Ovary (tissue), 10 donors: ENCODE measurements at regions of chr1 and their contacts with region 1.

Region 1: DNA sequence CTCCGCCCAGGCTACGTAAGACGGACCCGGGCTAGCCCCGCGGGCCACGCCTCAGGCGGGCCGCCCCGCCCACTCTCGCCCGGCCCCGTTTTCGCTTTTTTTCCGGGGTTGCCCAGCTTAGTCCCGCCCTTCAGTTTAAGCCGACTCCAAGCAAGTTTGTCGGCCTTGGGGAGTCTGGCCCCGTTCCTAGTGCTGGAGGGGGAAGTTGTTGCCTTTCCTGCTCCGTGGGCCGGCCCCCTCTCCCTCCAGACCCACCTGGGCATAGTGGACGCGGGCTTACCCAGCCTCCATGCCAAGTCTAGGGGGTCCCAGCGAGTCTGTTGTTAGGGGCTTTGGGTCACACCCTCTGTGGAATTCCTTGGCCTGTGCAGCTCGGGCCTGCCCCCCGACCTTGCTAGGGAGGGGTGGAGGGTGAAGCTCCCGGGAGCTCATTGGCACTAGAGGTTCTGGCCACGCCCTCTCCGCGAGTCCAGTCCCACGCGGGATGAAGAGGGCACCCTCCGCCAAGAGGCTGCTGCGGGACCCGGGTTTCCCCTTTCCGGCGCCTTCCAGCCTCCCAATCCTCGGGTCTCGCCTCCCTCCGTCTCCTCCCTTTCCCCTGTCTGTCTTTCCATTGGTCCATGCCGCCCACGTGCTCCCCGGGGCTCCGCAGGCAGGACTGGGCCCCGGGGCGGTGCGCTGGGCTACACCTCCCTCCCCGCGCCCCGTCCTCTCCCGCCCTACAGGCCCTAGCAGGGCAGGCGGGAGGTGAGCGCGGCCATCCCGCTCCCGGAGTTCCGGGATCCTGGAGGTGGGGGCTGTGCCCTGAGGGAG is 3.3 kb downstream of the RUSC1 start:
- DNase-seq: peak; percentile 94 to 95 (median 94)
- H3K4me3 ChIP-seq: peak overlapping the region; percentile 74
- H3K27ac ChIP-seq: peak overlapping the region; percentile 94 to 96
- H3K4me1 ChIP-seq: peaks cover 7% of the 10 kb centered on the region
- H3K27me3 ChIP-seq: no peaks in the 10 kb centered on the region
- CTCF ChIP-seq: no peak
- EP300 ChIP-seq: no peak
- POLR2A ChIP-seq: peak; percentile 53

Region 2: DNA sequence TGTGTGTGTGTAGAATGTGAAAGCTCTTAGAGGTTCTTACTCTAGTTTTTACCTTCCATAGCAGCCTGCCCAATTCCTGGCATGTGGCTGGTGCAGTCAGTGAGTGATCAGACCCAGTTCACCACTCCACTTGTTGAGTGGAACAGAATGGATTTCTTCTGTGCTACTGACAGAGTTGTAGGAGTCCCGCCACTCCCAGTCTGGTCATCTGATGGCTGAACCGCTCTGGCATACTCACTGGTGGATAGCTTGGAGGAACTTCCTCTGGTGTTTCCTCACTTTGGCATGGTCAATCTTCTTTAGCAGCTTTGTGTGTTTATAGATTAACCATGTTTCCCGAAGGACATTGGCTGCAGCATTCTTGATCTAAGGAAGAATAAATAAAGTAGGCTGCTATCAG is 609.4 kb before region 1 on chr1:
- intact Hi-C with region 1: no loop called
- DNase-seq: no peak
- H3K4me3 ChIP-seq: no peak overlapping the region
- H3K27ac ChIP-seq: no peak overlapping the region
- H3K4me1 ChIP-seq: peaks cover 8% of the 10 kb centered on the region
- H3K27me3 ChIP-seq: no peaks in the 10 kb centered on the region
- CTCF ChIP-seq: no peak
- EP300 ChIP-seq: no peak
- POLR2A ChIP-seq: no peak

Region 3: GRCh38 chr1:155127105-155127964 is 196.7 kb before region 1 on chr1 and contains the start of gene EFNA1:
- intact Hi-C with region 1: no loop called
- DNase-seq: peak; percentile 44 to 76 (median 59)
- H3K4me3 ChIP-seq: peak within 1 kb of the TSS; percentile 63
- H3K27ac ChIP-seq: peak within 1 kb of the TSS in 1 of 2 donors; percentile 33
- H3K4me1 ChIP-seq: peaks cover 15% of the 10 kb centered on the region
- H3K27me3 ChIP-seq: no peaks in the 10 kb centered on the region
- CTCF ChIP-seq: no peak
- EP300 ChIP-seq: peak; percentile 54
- POLR2A ChIP-seq: no peak
- total RNA-seq, gene EFNA1: 12.1 to 51.6 (median 16.6) TPM

Region 4: DNA sequence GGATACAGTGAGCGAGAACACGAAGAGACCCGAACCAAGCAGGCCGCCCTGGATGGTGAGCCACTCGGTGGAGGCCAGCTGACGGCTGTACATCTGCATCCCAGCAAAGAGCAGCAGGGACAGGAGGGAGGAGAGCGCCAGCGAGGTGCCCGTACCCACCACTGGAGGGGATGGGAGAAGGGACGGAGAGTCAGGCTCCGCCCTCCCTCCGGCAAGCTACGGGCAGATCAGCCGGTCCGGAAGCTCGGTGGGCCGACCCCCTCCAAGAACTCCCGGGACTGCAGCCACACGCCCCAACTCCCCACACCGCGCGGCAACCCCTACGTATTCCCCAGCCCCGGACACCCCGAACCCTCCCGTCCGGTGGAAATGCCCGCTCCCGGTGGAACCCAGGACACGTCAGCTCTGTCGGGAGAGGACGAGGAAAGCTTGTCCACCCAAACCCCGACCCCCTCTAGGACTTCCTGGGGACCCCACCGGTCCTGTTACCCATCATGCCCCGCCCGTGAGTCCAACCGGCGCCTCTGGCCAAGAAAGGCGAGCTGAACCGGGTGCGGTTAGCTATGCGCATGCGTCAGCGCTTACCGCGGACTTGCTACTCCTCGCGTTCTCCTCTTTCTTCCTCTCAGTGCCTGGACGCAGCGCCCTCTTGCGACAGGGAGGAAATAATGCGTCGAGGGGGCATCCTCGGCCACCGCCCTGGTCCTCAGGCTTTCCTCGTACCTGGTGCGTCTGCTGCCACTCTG is 151.1 kb before region 1 on chr1 and contains the start of gene KRTCAP2:
- intact Hi-C with region 1: loop called in 1 of 4 experiments (anchors 10 kb)
- DNase-seq: peak; percentile 94 to 96 (median 96)
- H3K4me3 ChIP-seq: peak within 1 kb of the TSS; percentile 95
- H3K27ac ChIP-seq: peak within 1 kb of the TSS; percentile 56 to 80
- H3K4me1 ChIP-seq: no peaks in the 10 kb centered on the region
- H3K27me3 ChIP-seq: no peaks in the 10 kb centered on the region
- CTCF ChIP-seq: peak; percentile 92 to 98 (median 96)
- EP300 ChIP-seq: no peak
- POLR2A ChIP-seq: peak; percentile 72
- total RNA-seq, gene KRTCAP2: 96.5 to 209 (median 158) TPM

Region 5: DNA sequence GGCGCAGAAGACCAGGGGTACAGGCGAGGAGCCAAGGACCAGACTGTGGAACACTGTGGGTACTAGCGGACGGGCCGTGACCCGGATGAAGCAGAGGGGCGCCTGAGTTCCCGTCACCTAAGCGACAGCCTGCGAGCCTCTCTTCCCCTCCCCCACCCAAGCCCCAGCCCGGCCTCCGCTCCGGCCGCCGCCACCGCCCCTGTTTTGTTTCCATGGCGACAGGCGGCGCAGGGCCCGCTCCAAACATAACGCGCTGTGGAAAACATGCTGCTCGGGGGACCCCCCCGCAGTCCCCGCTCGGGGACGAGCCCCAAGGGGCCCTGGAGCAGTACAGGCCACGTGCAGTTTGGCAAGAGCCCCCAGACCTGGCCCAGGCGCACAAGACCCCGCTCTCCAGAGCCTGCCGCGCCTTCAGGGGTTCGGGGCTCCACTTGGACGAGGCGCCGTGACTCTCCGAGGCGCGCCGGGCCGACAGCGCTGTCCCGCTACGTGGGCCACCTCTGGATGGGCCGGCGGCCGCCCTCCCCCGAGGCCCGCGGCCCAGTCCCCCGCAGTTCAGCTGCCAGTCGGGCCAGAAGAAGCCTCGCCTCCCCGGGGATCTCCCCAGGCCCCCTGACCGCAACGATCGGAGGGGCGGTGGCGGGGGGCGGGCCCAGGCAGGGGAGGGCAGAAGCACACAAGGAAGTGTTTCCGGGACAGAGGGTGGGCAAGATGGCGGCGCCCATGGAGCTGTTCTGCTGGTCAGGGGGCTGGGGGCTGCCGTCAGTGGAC is 115.3 kb before region 1 on chr1 and contains the start of gene MTX1:
- intact Hi-C with region 1: loop called in 1 of 4 experiments (anchors 10 kb)
- DNase-seq: peak; percentile 92 to 97 (median 95)
- H3K4me3 ChIP-seq: peak within 1 kb of the TSS; percentile 59
- H3K27ac ChIP-seq: peak within 1 kb of the TSS; percentile 97 to 100
- H3K4me1 ChIP-seq: peaks cover 8% of the 10 kb centered on the region
- H3K27me3 ChIP-seq: no peaks in the 10 kb centered on the region
- CTCF ChIP-seq: peak in 2 of 3 donors; percentile 19 to 29
- EP300 ChIP-seq: peak; percentile 25
- POLR2A ChIP-seq: peak; percentile 75
- total RNA-seq, gene MTX1: 18.5 to 33.4 (median 27.7) TPM

Region 6: DNA sequence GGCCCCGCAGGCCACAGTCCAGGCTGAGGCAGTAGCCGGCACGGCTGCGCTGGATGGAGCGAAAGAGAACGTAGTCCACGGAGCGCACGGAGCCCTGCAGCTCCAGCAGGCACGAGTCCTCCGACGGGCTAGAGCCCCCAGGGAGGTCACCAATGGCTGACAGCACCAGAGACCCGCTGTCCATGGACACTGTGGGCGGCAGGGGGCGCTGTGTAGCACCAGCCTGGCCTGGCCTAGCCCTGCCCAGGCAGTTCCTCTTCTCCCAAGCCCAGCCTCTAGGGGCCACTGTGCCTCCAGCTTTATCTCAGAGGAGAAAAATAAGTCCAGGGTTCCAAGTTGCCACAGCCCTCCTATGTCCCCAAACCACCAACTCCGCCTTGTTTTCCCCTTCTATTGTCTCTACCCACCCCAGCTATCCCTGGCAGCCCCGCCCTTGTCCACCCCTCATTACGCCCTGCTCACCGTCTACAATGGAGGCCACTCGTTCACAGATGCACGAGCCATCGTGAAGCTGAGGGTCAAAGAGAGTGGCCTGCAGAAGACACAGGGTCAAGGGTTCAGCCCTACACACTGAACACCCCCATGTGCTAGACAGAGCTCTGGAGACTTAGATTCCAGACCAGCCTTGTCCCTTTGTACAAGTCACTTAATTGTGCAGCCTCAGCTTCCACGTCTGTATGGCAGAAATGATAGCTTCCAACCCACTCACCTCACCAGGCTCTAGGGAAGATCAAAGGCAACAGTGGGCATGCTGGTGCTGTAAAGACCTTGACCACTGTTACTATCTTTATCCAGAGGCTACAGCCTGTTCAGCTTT is 73.2 kb before region 1 on chr1:
- intact Hi-C with region 1: loop called in 3 of 4 experiments (anchors 5 to 10 kb)
- DNase-seq: peak; percentile 87 to 94 (median 93)
- H3K4me3 ChIP-seq: no peak overlapping the region
- H3K27ac ChIP-seq: no peak overlapping the region
- H3K4me1 ChIP-seq: peaks cover 7% of the 10 kb centered on the region
- H3K27me3 ChIP-seq: no peaks in the 10 kb centered on the region
- CTCF ChIP-seq: peak; percentile 98 to 99 (median 98)
- EP300 ChIP-seq: no peak
- POLR2A ChIP-seq: no peak

Region 7: DNA sequence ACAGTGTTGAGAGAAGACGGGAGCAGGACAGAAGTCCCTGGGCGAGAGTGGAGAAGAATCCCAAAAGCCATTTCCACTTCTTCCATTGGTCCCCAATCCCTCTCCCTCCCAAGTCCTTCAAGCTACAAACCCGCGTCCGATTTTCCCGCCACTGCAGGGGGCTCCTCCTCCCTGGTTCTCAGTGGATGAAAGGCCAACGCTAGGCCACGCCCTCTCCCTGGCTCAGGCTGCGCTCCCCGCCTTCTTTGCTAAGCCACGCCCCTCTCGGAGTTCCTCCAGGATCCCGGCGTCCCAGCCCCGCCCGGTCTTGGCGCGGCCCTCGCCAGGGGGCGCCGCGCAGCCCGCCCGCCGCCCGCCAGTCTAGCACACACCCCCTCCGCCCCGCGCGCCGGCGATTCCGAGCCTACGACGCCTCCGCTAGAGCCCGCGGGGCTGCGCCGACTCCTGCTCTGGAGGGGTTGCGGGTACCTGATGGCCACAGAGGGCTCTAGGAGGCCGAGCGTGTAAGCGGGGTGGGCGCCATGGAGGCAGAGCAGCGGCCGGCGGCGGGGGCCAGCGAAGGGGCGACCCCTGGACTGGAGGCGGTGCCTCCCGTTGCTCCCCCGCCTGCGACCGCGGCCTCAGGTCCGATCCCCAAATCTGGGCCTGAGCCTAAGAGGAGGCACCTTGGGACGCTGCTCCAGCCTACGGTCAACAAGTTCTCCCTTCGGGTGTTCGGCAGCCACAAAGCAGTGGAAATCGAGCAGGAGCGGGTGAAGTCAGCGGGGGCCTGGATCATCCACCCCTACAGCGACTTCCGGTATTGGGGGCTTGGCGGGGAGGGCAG is 46.7 kb before region 1 on chr1 and contains the start of gene HCN3:
- intact Hi-C with region 1: loop called (anchors 5 kb)
- DNase-seq: peak; percentile 99 to 100 (median 99)
- H3K4me3 ChIP-seq: peak within 1 kb of the TSS; percentile 71
- H3K27ac ChIP-seq: peak within 1 kb of the TSS in 1 of 2 donors; percentile 56
- H3K4me1 ChIP-seq: peaks cover 5% of the 10 kb centered on the region
- H3K27me3 ChIP-seq: no peaks in the 10 kb centered on the region
- CTCF ChIP-seq: peak; percentile 66 to 86 (median 67)
- EP300 ChIP-seq: no peak
- POLR2A ChIP-seq: no peak
- total RNA-seq, gene HCN3: 0.69 to 7.1 (median 4.4) TPM

Region 8: GRCh38 chr1:155282488-155283091 is 41.4 kb before region 1 on chr1:
- intact Hi-C with region 1: loop called (anchors 5 kb)
- DNase-seq: no peak
- H3K4me3 ChIP-seq: no peak overlapping the region
- H3K27ac ChIP-seq: no peak overlapping the region
- H3K4me1 ChIP-seq: peaks cover 4% of the 10 kb centered on the region
- H3K27me3 ChIP-seq: no peaks in the 10 kb centered on the region
- CTCF ChIP-seq: no peak
- EP300 ChIP-seq: no peak
- POLR2A ChIP-seq: no peak

Region 9: GRCh38 chr1:155342842-155343241 is 18.8 kb after region 1 on chr1:
- intact Hi-C with region 1: no loop called
- DNase-seq: no peak
- H3K4me3 ChIP-seq: no peak overlapping the region
- H3K27ac ChIP-seq: no peak overlapping the region
- H3K4me1 ChIP-seq: no peaks in the 10 kb centered on the region
- H3K27me3 ChIP-seq: no peaks in the 10 kb centered on the region
- CTCF ChIP-seq: no peak
- EP300 ChIP-seq: no peak
- POLR2A ChIP-seq: no peak